ENCODE measurements at regions of chr7 and their contacts with region 1.

Region 1: GRCh38 chr7:68491523-68492317 is 1106.6 kb upstream of the AUTS2 start:
- DNase-seq: no peak
- H3K4me3 ChIP-seq: no peak overlapping the region
- H3K27ac ChIP-seq: no peak overlapping the region
- H3K4me1 ChIP-seq: no peaks in the 10 kb centered on the region
- H3K27me3 ChIP-seq: no peaks in the 10 kb centered on the region
- CTCF ChIP-seq: no peak
- POLR2A ChIP-seq: no peak

Region 2: GRCh38 chr7:69932034-69932628 is 1440.4 kb after region 1 on chr7:
- intact Hi-C with region 1: loop called in 1 of 2 experiments (anchors 10 kb)
- DNase-seq: peak; percentile 28 to 70 (median 39)
- H3K4me3 ChIP-seq: no peak overlapping the region
- H3K27ac ChIP-seq: no peak overlapping the region
- H3K4me1 ChIP-seq: no peaks in the 10 kb centered on the region
- H3K27me3 ChIP-seq: no peaks in the 10 kb centered on the region
- CTCF ChIP-seq: peak; percentile 50 to 78 (median 69)
- POLR2A ChIP-seq: no peak

Measured in adrenal gland (tissue), 19 donors.